ENCODE measurements at regions of chr13 and their contacts with region 1.

Region 1: DNA sequence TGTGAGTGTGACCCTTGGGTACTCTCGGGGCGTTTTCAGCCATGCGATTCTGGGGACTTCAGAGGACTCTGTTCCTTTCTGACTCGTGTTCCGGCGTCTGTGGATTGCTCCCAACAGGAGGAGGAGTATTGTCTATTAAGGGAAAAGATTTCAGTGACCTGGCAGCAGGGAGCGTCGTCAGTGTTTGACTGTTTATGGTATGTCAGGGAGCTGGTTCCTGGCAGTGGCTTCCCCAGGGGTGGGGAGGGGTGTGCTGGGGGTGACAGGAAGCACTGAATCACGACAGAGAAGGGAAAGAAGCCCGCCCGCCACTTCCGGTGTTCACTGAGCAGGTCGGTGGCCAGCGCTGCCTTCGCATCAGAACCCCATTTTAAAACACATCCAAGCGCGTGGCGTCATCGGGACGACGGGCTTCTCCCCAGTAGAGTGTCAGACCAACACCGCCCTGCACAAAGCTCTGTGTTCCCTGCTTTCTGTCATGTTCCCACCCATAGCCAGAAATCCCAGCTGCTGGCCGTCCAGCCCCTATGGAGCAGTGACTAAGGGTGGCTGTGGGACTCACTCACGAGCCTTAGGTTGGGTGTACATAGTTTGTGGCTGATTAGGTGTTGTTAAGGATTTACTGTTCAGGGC is 33.8 kb downstream of the COL4A2 start:
- DNase-seq: peak; percentile 85
- H3K4me3 ChIP-seq: peak overlapping the region in 2 of 8 donors; percentile 2 to 46
- H3K27ac ChIP-seq: peak overlapping the region; percentile 64 to 90 (median 80)
- H3K4me1 ChIP-seq: peaks cover 18 to 70% (median 44%) of the 10 kb centered on the region in 6 donors
- H3K27me3 ChIP-seq: peaks cover 0 to 14% (median 0%) of the 10 kb centered on the region in 7 donors
- CTCF ChIP-seq: no peak
- POLR2A ChIP-seq: no peak

Region 2: GRCh38 chr13:110421696-110422385 is 80.9 kb after region 1 on chr13:
- intact Hi-C with region 1: loop called (anchors 10 kb)
- DNase-seq: no peak
- H3K4me3 ChIP-seq: no peak overlapping the region
- H3K27ac ChIP-seq: peak overlapping the region in 4 of 8 donors; percentile 4 to 69 (median 36)
- H3K4me1 ChIP-seq: peaks cover 0 to 64% (median 22%) of the 10 kb centered on the region in 6 donors
- H3K27me3 ChIP-seq: peaks cover 0 to 70% (median 3%) of the 10 kb centered on the region in 7 donors
- CTCF ChIP-seq: no peak
- POLR2A ChIP-seq: no peak